HEK293 (cell line): ENCODE measurements at regions of chr11 and their contacts with region 1.

Region 1: DNA sequence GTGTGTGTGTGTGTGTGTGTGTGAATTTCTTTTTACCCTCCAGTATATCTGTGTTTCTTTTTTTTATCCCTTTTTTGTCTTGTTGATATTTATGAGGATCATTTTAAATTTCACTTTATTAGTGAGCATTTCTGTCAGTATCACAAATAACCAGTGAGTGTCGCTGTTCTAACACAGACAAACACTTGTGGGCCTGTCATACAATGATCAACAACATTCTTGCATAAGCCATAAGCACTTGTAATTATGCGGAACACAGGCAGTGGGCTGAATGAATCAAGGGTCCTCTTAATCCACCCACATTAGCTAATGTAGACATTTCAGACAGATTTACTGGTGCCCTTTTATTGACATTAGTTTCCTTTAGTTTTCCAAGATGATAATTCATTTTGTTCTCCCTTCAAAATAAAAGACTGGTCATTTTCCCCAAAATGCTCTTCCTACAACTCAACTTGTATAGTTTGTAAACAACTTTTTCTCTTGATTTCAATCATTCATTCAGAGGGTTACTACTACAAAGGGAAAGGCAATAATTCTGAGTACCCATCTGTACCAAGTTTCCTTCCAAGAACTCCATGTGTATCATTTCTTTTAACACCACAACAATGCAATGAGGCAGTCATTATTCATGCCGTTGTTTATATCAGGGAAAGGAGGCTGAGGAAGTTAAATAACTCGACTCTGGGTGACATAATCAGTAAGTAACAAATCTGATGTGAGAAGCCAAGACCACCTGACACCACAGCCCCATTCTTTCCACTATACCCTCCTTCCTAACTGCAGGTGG is 34.5 kb upstream of the ANO3 start:
- H3K4me3 ChIP-seq: no peak overlapping the region
- H3K27ac ChIP-seq: no peak overlapping the region
- H3K4me1 ChIP-seq: no peaks in the 10 kb centered on the region
- CTCF ChIP-seq: no peak

Region 2: DNA sequence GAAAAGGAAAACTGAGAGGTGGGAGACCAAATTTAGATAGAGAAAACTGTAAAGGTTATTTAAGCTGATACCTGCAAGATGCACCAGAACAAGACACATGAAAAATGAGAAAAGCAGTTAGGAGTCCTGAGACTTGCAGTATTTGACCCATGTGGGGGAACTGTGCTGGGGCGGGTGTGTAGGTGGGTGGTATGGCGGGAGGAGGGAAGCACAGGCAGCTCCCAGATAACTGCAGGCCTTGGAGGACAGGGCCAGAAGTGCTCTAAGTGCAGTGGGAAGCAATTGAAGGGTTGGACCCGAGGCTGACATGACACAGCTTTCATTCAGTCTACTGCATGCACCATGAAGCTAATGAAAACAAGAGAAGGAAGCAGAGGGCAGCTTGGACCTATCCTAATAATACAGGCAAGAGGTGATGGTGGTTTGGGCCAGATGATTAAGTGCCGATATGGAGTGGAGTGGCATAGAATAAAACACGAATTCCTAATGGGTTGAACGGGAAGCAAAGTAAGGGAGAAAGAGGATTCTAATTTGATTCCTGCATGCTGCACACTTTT is 13.5 kb before region 1 on chr11:
- CTCF ChIA-PET with region 1: interaction called, 13 read pairs
- POLR2A ChIA-PET with region 1: no interaction called
- H3K4me3 ChIP-seq: no peak overlapping the region
- H3K27ac ChIP-seq: no peak overlapping the region
- H3K4me1 ChIP-seq: no peaks in the 10 kb centered on the region
- CTCF ChIP-seq: no peak

Region 3: DNA sequence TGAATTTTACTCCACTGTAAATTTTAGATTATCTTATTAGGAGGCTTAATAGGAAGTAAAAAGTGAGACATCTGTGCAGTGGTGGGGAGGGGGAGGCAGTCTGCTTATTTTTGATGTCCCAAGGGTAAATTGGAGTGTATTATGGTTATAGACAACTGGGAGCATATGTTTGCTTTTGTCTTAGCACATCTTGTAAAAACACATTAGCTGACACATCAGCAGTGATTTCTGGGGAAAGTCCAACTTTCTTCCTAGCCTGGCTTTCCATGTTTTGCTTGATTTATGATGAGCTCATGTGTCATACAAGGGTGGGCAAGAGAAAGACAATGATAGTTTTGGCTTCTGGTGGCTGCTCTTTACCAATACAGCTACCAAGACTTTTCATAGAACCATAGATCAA is 38.5 kb after region 1 on chr11:
- CTCF ChIA-PET with region 1: no interaction called
- POLR2A ChIA-PET with region 1: no interaction called
- H3K4me3 ChIP-seq: no peak overlapping the region
- H3K27ac ChIP-seq: no peak overlapping the region
- H3K4me1 ChIP-seq: no peaks in the 10 kb centered on the region
- CTCF ChIP-seq: no peak

Region 4: GRCh38 chr11:26551186-26551801 is 253.9 kb after region 1 on chr11:
- CTCF ChIA-PET with region 1: interaction called, 11 read pairs
- POLR2A ChIA-PET with region 1: no interaction called
- H3K4me3 ChIP-seq: no peak overlapping the region
- H3K27ac ChIP-seq: no peak overlapping the region
- H3K4me1 ChIP-seq: no peaks in the 10 kb centered on the region
- CTCF ChIP-seq: no peak

Region 5: GRCh38 chr11:26649884-26650283 is 352.5 kb after region 1 on chr11:
- CTCF ChIA-PET with region 1: interaction called, 17 read pairs
- POLR2A ChIA-PET with region 1: no interaction called
- H3K4me3 ChIP-seq: no peak overlapping the region
- H3K27ac ChIP-seq: no peak overlapping the region
- H3K4me1 ChIP-seq: no peaks in the 10 kb centered on the region
- CTCF ChIP-seq: no peak